ENCODE measurements at regions of chrX and their contacts with region 1.

Region 1: DNA sequence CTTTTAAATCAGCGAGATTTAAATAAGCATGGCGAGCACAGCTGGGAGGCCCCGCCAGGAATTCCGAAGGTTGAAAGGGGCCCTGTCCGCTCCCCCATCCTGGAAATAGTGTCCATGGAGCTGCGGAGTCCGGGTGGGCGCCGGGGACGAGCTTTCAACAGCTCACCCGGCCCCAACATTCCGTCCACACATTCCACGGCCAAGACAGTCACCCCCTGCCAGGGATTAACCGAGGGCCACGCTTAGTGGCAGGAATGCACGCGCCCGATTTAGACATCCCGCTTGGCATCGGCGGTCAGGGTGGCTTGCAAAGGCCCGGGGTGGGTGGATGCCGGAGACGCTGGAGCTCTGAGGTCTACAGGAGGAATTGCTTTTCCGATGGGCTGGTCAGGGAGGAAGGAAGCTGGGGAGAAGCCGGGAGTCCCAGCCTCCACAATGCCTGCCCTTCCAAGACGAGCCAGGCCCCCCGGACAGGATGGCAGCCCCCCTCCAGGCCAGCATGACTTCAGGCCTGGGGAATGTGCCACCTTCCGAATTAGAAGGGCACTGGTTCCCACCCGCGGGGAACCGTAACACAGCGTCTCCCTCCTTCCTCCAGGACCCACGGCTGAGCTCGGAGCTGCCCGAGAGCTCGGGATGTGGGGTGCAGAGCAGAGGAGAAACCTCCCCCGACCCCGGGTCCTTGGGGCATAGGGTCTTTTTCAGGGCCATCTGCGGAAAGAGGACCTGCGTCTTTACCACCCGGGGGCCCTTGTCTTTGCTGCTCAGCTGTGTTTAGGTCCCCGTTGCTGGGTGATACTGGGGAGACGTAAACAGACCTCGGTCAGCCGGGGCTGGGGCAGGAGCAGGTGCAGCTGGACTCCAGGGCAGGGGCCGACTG is 26.9 kb upstream of the PPP2R3B start:
- DNase-seq: peak; percentile 68 to 74
- ATAC-seq: peak; percentile 88 to 95 (median 92)
- H3K4me3 ChIP-seq: peak overlapping the region; percentile 0 to 54 (median 46)
- H3K27ac ChIP-seq: peak overlapping the region in 9 of 10 donors; percentile 67 to 91 (median 86)
- H3K4me1 ChIP-seq: peaks cover 0 to 15% (median 6%) of the 10 kb centered on the region in 9 donors
- H3K27me3 ChIP-seq: peaks cover 0 to 13% (median 0%) of the 10 kb centered on the region in 7 donors
- CTCF ChIP-seq: peak in 6 of 9 donors; percentile 10 to 51 (median 40)

Region 2: DNA sequence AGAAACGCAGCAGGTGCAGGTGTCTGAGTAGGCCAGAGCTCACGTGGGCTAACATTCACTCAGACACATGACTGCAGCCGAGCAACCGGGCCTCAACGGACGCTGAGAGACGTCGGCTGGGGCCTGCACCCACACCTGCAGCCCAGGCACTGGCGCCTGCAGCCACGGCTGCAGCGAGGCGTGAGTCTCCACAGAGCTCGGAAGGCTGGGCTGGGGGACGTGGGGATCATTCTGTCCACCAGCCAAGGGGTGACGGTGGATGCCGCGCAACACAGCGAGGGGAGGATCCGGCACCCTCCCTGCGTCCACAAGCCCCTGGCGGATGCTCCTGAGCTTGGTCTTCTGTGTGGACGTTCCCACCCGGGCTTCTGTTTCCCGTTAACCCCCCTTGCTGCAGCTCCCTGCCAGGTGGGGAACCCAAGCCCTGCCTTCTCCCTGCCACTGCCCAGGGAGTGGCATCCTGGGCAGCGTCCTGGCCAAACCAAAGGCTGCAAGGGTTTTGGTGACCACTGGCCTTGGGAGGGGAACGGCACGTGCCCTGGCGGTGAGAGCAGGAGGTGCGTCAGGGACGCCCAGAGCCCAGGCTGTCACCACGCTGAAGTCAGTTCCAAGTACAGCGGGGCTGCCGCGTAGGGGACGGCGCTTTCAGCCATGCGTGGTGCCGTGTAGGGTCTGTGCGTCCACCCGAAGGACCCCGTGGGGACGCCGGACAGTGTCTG is 43.2 kb before region 1 on chrX:
- intact Hi-C with region 1: loop called in 1 of 10 experiments (anchors 2 kb)
- DNase-seq: peak in 1 of 2 donors; percentile 29
- ATAC-seq: peak; percentile 10 to 81 (median 61)
- H3K4me3 ChIP-seq: peak overlapping the region in 9 of 10 donors; percentile 12 to 37 (median 26)
- H3K27ac ChIP-seq: peak overlapping the region; percentile 76 to 96 (median 92)
- H3K4me1 ChIP-seq: peaks cover 0 to 52% (median 24%) of the 10 kb centered on the region in 9 donors
- H3K27me3 ChIP-seq: peaks cover 0 to 40% (median 13%) of the 10 kb centered on the region in 7 donors
- CTCF ChIP-seq: peak in 4 of 9 donors; percentile 9 to 20 (median 16)

Region 3: DNA sequence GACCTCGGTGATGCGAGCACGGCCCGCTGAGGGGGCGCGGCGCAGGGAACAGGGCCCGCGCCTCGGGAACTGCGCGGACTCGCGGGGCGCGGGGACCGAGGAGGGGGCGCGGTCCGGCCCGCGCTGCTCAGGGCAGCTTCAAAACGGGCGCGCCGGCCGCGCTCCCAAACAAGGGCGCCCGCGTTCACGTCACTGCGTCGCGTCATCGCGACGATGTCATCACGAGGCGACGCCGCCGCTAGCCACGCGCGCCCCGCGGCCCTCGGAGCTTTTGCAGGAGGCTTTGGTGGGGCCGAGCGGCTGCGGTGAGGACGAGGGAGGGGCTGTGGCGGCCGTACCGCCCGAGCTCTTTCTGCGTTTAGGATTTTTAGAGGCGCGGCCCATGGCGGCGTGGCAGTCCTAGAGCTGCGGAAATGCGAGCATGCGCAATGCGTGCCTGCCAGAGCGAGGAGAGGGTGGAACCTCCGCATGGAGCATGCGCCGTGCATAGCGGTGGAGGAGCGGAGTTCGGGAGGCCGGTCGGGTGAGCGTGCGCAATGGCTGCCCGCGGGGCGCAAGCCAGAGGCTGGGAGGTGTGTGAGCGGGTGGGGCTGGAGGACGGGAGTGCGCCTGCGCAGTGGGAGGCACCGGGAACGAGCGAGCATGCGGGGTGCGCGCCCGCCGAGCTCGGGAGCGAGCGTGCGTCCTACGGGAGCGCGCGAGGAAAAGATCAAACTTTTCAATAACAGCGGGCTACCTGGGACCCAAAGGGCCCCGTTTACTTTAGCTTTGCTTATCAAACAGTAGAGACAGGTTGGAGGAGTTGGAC is 26.6 kb before region 1 on chrX and contains the start of gene PPP2R3B:
- intact Hi-C with region 1: loop called in 1 of 10 experiments (anchors 2 kb)
- DNase-seq: peak; percentile 99 to 100
- ATAC-seq: peak; percentile 100
- H3K4me3 ChIP-seq: peak within 1 kb of the TSS; percentile 42 to 99 (median 74)
- H3K27ac ChIP-seq: peak within 1 kb of the TSS; percentile 94 to 100 (median 99)
- H3K4me1 ChIP-seq: peaks cover 0 to 15% (median 8%) of the 10 kb centered on the region in 9 donors
- H3K27me3 ChIP-seq: no peaks in the 10 kb centered on the region
- CTCF ChIP-seq: no peak
- total RNA-seq, gene PPP2R3B: 88.3 to 173 (median 128) TPM

Region 4: DNA sequence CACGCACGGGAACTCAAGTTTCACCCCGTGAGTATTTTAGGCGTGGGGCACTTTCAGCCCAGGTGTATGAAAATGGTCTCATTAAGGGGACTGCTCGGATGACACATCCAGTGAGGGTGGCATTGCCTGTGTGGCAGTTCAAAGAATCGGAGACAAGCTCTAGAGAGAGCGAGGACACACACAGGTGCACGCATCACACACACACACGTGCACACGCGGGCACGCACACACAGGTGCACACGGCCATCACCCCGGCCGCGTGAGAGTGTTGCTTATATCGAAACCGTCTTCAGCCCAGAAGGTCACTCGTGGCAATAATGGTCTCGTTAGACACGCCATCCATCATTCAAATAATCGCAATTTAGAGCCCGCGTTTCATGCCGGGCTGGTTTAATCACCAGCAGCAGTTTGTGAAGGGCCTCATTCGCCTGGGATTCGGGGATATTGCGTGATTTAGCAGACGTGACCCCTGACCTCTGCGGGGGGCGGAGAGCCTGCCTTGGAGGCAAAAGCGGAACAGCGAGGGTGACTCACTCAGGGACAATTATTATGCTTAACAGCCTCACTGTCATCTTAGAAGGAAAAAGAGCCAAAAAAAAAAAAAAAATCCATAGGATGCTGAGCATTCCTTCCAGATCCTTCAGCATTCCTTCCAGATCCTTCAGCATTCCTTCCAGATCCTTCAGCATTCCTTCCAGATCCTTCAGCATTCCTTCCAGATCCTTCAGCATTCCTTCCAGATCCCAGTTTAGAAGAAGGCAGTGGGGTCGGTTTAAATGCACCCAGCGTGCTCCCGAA is 62.6 kb after region 1 on chrX:
- intact Hi-C with region 1: no loop called
- DNase-seq: no peak
- ATAC-seq: no peak
- H3K4me3 ChIP-seq: no peak overlapping the region
- H3K27ac ChIP-seq: no peak overlapping the region
- H3K4me1 ChIP-seq: no peaks in the 10 kb centered on the region
- H3K27me3 ChIP-seq: peaks cover 0 to 8% (median 0%) of the 10 kb centered on the region in 7 donors
- CTCF ChIP-seq: no peak

Region 5: GRCh38 chrX:526295-527224 is 113.0 kb after region 1 on chrX:
- intact Hi-C with region 1: no loop called
- DNase-seq: no peak
- ATAC-seq: no peak
- H3K4me3 ChIP-seq: no peak overlapping the region
- H3K27ac ChIP-seq: no peak overlapping the region
- H3K4me1 ChIP-seq: no peaks in the 10 kb centered on the region
- H3K27me3 ChIP-seq: peaks cover 0 to 7% (median 0%) of the 10 kb centered on the region in 7 donors
- CTCF ChIP-seq: no peak

Measured in heart right ventricle (tissue), 16 donors.